ENCODE measurements at regions of chr20 and their contacts with region 1.

Region 1: DNA sequence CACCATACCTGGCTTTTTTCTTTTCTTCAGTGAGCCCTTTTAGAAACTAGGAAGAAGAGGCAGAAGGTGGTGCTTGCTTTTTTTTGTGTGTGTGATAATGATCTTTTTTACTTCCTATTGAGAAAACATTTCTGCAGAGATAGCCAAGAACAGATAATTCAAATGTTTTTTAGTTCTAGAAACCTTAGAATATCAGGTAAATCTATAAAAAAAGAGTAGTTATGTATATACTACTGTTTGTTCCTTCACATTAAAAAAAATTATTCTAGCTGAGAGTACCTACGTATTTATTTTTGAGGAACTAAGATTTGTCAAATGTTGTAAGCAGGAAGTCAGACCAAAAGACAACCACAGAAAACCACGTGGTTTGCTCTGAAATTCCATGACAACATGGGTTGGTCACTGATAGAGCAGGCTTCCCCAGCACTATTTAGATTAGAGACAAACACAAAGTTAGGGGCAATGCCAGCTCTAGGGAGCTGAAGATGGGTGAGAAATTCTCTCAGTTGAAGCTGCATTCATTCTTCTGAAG is 12.8 kb downstream of the STK4 start:
- DNase-seq: peak; percentile 25 to 49
- H3K4me3 ChIP-seq: no peak overlapping the region
- H3K27ac ChIP-seq: no peak overlapping the region; the same call in 1 of the 2 replicates
- H3K4me1 ChIP-seq: no peaks in the 10 kb centered on the region
- H3K27me3 ChIP-seq: no peaks in the 10 kb centered on the region
- CTCF ChIP-seq: no peak

Region 2: GRCh38 chr20:45189067-45189609 is 210.0 kb after region 1 on chr20:
- CTCF ChIA-PET with region 1: no interaction called
- POLR2A ChIA-PET with region 1: interaction called, 12 read pairs
- intact Hi-C with region 1: no loop called
- DNase-seq: peak in 1 of 2 experiments; percentile 11
- H3K4me3 ChIP-seq: no peak overlapping the region
- H3K27ac ChIP-seq: no peak overlapping the region
- H3K4me1 ChIP-seq: 0 out of 2 replicates have a peak, but pooled peaks cover 7% of the 10 kb centered on the region
- H3K27me3 ChIP-seq: no peaks in the 10 kb centered on the region
- CTCF ChIP-seq: no peak

Region 3: GRCh38 chr20:45704969-45705637 is 725.9 kb after region 1 on chr20 and contains the start of gene WFDC10B:
- CTCF ChIA-PET with region 1: no interaction called
- POLR2A ChIA-PET with region 1: interaction called, 12 read pairs
- intact Hi-C with region 1: no loop called
- DNase-seq: peak in 1 of 2 experiments; percentile 39
- H3K4me3 ChIP-seq: no peak within 1 kb of the TSS
- H3K27ac ChIP-seq: no peak within 1 kb of the TSS
- H3K4me1 ChIP-seq: peaks cover 7% of the 10 kb centered on the region; the same call in 1 of the 2 replicates
- H3K27me3 ChIP-seq: no peaks in the 10 kb centered on the region
- CTCF ChIP-seq: no peak
- total RNA-seq, gene WFDC10B: not detected in 2 replicates

Measured in PC-9 (cell line).